Heart left ventricle (tissue), 16 donors: ENCODE measurements at regions of chr2 and their contacts with region 1.

Region 1: DNA sequence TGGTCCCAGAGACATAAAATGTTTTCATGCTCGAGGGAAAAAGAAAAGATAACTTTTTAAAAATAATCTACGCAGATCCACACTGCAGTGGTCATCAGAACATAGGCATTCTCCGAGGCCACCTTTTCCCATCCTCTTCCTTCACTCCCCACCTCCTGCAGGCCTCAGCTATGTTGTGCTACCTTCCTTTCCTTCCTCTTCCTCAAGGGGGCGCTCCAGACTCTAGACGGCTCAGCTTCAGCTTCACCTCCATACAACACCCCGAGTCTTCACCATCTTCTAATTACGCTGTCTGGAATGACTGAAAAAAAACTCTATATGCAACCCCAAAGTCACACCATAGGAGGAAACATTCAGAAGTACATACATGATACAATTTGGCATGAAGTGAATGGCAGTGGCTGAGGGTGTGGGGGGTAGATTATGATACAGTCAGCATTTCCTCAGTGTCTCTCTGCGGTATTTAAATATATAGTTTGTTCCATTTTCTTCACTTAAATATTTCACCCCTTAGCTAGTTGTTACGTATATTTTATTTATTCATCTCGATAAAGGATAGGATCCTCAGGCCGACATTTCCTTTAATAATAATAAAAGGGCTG is 583.6 kb downstream of the IRS1 start:
- DNase-seq: peak in 4 of 5 donors; percentile 35 to 57 (median 42)
- ATAC-seq: peak; percentile 37 to 82 (median 80)
- H3K4me3 ChIP-seq: no peak overlapping the region
- H3K27ac ChIP-seq: no peak overlapping the region
- H3K4me1 ChIP-seq: peaks cover 0 to 14% (median 7%) of the 10 kb centered on the region in 12 donors
- H3K27me3 ChIP-seq: no peaks in the 10 kb centered on the region
- CTCF ChIP-seq: peak; percentile 46 to 74 (median 63)
- POLR2A ChIP-seq: no peak

Region 2: GRCh38 chr2:225889446-225889850 is 326.6 kb before region 1 on chr2:
- intact Hi-C with region 1: loop called in 2 of 10 experiments (anchors 5 to 10 kb)
- DNase-seq: peak in 1 of 5 donors; percentile 7
- ATAC-seq: peak in 2 of 4 donors; percentile 52 to 64
- H3K4me3 ChIP-seq: no peak overlapping the region
- H3K27ac ChIP-seq: no peak overlapping the region
- H3K4me1 ChIP-seq: no peaks in the 10 kb centered on the region
- H3K27me3 ChIP-seq: no peaks in the 10 kb centered on the region
- CTCF ChIP-seq: peak; percentile 49 to 86 (median 76)
- POLR2A ChIP-seq: no peak

Region 3: GRCh38 chr2:226447338-226448295 is 231.6 kb after region 1 on chr2:
- intact Hi-C with region 1: loop called in 1 of 10 experiments (anchors 10 kb)
- DNase-seq: no peak
- ATAC-seq: peak in 1 of 4 donors; percentile 19
- H3K4me3 ChIP-seq: no peak overlapping the region
- H3K27ac ChIP-seq: peak overlapping the region in 5 of 12 donors; percentile 17 to 61 (median 54)
- H3K4me1 ChIP-seq: peaks cover 0 to 33% (median 10%) of the 10 kb centered on the region in 12 donors
- H3K27me3 ChIP-seq: no peaks in the 10 kb centered on the region
- CTCF ChIP-seq: no peak
- POLR2A ChIP-seq: no peak

Region 4: GRCh38 chr2:226721541-226721940 is 505.5 kb after region 1 on chr2:
- intact Hi-C with region 1: loop called in 3 of 10 experiments (anchors 10 kb)
- DNase-seq: peak; percentile 24 to 68 (median 53)
- ATAC-seq: peak in 1 of 4 donors; percentile 16
- H3K4me3 ChIP-seq: no peak overlapping the region
- H3K27ac ChIP-seq: no peak overlapping the region
- H3K4me1 ChIP-seq: peaks cover 0 to 37% (median 12%) of the 10 kb centered on the region in 12 donors
- H3K27me3 ChIP-seq: no peaks in the 10 kb centered on the region
- CTCF ChIP-seq: no peak
- POLR2A ChIP-seq: no peak

Region 5: GRCh38 chr2:226733189-226733858 is 517.3 kb after region 1 on chr2:
- intact Hi-C with region 1: loop called in 5 of 10 experiments (anchors 10 kb)
- DNase-seq: no peak
- ATAC-seq: peak in 3 of 4 donors; percentile 54 to 68 (median 64)
- H3K4me3 ChIP-seq: no peak overlapping the region
- H3K27ac ChIP-seq: peak overlapping the region in 11 of 12 donors; percentile 2 to 58 (median 24)
- H3K4me1 ChIP-seq: peaks cover 0 to 34% (median 15%) of the 10 kb centered on the region in 12 donors
- H3K27me3 ChIP-seq: no peaks in the 10 kb centered on the region
- CTCF ChIP-seq: no peak
- POLR2A ChIP-seq: no peak